Transverse colon (tissue), 4 donors: ENCODE measurements at regions of chr1 and their contacts with region 1.

Region 1: DNA sequence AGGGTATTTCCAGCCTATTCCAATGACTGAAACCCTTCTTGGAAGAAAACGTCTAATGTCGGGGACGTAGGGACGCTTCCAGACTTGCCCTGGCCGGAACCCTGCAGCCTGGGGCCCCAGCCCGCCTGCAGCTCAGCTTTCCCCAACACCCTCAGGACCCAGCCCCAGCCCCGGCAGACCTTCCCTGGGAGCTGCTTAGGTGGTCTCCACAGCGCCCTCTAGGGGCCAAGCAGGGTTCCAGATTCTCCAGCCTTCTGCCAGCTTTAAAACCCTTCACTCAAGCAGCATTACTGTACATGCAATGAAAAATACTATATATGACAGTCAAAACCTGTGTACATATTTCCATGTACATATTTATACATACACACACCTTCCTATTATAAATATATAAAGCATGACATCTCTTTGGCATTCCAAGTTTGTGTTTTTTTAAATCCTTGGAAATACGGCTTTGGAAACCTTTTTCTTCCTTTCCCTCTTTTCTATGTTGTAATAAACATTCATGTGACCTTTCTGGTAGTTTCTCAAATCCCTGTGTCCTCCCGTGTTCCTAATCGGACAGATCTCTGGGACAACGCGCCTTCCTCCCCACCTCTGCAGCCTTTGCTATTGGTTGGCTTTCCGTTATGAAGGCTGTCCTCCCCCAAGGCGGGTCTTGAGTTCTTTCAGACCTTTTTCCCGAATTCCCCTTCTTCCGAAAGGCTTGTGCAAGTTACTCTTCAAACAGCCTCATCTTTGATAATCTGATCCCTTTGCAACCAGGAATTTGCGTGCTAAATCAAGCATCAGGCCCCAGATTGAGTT is 60.3 kb downstream of the STUM start:
- DNase-seq: peak; percentile 74
- H3K4me3 ChIP-seq: no peak overlapping the region
- H3K27ac ChIP-seq: no peak overlapping the region
- H3K4me1 ChIP-seq: peaks cover under 1 to 6% (median 3%) of the 10 kb centered on the region in 4 donors
- H3K27me3 ChIP-seq: no peaks in the 10 kb centered on the region
- CTCF ChIP-seq: peak; percentile 74 to 90 (median 84)
- EP300 ChIP-seq: no peak
- POLR2A ChIP-seq: no peak

Region 2: GRCh38 chr1:226293553-226293920 is 315.4 kb before region 1 on chr1:
- in situ Hi-C with region 1: no loop called
- intact Hi-C with region 1: no loop called
- DNase-seq: peak; percentile 43
- H3K4me3 ChIP-seq: no peak overlapping the region
- H3K27ac ChIP-seq: no peak overlapping the region
- H3K4me1 ChIP-seq: peaks cover 0 to 5% (median 2%) of the 10 kb centered on the region in 4 donors
- H3K27me3 ChIP-seq: no peaks in the 10 kb centered on the region
- CTCF ChIP-seq: no peak
- EP300 ChIP-seq: no peak
- POLR2A ChIP-seq: no peak

Region 3: DNA sequence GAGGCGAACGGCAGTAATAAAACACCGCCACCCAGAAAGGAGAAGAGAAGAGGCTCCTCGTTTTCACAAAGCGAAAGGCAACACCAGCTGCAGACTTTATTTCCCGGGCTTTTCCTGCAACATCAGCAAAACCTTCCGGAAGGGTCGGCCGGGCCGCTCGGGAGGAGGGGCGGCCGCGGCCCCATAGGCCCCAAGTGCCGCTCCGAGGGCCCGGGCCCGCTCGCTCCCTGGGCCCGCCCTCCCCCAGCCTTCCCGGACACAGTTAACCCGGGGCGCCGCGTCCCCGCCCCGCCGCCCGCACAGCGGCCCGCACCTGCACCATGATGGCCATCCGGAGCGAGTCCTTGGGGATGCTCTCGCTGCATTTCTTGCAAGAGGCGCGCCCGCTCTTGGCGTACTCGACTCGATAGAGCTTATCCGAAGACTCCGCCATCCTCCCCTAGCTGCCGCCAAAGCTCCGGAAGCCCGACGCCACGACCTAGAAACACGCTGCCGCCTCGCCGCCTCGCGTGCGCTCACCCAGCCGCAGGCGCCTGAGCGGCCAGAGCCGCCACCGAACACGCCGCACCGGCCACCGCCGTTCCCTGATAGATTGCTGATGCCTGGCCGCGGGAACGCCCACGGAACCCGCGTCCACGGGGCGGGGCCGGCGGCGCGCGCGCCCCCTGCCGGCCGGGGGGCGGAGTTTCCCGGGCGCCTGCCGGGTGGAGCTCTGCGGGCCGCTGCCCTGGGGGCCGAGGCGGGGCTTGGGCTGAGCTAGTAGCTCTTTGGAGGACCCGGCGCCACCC is 201.2 kb before region 1 on chr1 and contains the start of gene PARP1:
- in situ Hi-C with region 1: loop called in 2 of 4 experiments (anchors 25 kb)
- intact Hi-C with region 1: no loop called
- DNase-seq: peak; percentile 90
- H3K4me3 ChIP-seq: peak within 1 kb of the TSS; percentile 58 to 90 (median 76)
- H3K27ac ChIP-seq: peak within 1 kb of the TSS; percentile 85 to 95 (median 92)
- H3K4me1 ChIP-seq: peaks cover 17 to 45% (median 34%) of the 10 kb centered on the region in 4 donors
- H3K27me3 ChIP-seq: no peaks in the 10 kb centered on the region
- CTCF ChIP-seq: peak in 4 of 5 experiments; percentile 32 to 85 (median 74)
- EP300 ChIP-seq: no peak
- POLR2A ChIP-seq: peak; percentile 65
- total RNA-seq, gene PARP1: 23.2 to 74.4 (median 38.0) TPM